Esophagus muscularis mucosa (tissue), 4 donors: ENCODE measurements at regions of chr1 and their contacts with region 1.

Region 1: DNA sequence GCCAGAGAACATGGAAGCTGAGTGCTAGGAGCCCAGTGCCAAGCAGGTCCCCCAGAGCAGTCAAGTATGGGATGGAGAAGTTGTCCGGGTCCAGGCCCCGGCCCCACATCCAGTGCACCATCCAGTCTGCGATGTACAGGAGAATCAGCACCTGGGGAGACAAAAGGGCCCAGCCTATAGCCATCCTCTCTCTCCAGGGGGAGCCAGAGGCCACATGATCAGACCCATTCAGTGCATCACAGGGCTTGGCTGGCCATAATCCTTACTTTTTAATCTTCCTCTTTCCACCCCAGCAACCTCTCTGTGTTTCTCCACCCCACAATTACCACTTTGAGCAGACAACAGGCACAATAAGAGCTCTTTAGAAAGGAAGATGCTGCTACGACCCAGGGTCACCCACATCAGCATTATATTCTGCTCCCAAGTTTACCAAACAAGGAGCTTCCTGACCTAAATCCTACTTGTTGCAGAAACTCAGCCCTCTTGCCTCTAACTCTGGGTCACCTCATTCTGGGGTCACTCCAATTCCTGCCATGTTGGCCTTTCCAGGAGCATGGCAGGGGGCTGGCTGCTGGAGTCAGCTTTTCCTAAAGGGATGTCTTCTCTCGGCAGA is 16.4 kb upstream of the RAB29 start:
- DNase-seq: no peak
- H3K4me3 ChIP-seq: no peak overlapping the region
- H3K27ac ChIP-seq: no peak overlapping the region
- H3K4me1 ChIP-seq: peaks cover 0 to 8% (median 4%) of the 10 kb centered on the region in 4 donors
- H3K27me3 ChIP-seq: no peaks in the 10 kb centered on the region
- CTCF ChIP-seq: peak; percentile 73 to 84 (median 82)
- EP300 ChIP-seq: no peak
- POLR2A ChIP-seq: no peak

Region 2: DNA sequence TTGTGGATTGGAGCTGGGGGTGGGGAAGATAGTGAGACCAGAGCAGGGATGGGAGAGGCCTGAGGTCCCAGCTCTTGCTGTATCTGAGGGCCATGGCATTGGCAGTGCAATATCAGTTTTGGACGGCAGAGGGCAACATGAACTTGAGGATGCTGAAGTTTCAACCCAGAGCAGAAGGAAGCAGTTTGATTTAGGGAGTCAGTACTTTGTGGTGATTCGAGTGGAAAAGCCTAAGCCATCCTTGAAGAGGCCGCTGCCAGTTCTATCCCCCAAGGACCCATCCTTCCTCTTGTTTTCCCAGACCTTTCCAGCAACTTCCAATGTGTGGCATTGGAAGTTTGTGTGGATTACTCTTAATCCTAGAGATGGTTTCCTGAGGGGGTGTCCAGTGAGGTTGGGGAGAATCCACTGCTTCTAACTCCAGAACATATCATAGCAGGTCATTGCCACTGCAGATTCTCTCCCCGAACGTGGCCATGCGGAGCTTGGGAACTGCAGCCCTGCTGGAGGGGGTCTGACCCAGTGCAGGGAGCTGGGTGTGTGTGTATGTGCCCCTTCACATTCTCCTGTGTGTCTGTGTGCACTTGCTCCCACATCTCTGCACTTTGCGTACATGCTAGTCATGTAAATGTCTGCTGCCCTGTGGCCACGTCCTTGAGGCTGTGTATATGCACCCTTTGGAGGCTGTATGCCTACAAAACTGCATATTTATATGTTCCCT is 127.5 kb after region 1 on chr1:
- intact Hi-C with region 1: loop called (anchors 5 kb)
- DNase-seq: peak; percentile 95
- H3K4me3 ChIP-seq: no peak overlapping the region
- H3K27ac ChIP-seq: no peak overlapping the region
- H3K4me1 ChIP-seq: peaks cover 5 to 27% (median 17%) of the 10 kb centered on the region in 4 donors
- H3K27me3 ChIP-seq: peaks cover 0 to 14% (median 0%) of the 10 kb centered on the region in 4 donors
- CTCF ChIP-seq: peak; percentile 86 to 97 (median 92)
- EP300 ChIP-seq: no peak
- POLR2A ChIP-seq: no peak